SK-N-SH (cell line): ENCODE measurements at regions of chr15 and their contacts with region 1.

Region 1: DNA sequence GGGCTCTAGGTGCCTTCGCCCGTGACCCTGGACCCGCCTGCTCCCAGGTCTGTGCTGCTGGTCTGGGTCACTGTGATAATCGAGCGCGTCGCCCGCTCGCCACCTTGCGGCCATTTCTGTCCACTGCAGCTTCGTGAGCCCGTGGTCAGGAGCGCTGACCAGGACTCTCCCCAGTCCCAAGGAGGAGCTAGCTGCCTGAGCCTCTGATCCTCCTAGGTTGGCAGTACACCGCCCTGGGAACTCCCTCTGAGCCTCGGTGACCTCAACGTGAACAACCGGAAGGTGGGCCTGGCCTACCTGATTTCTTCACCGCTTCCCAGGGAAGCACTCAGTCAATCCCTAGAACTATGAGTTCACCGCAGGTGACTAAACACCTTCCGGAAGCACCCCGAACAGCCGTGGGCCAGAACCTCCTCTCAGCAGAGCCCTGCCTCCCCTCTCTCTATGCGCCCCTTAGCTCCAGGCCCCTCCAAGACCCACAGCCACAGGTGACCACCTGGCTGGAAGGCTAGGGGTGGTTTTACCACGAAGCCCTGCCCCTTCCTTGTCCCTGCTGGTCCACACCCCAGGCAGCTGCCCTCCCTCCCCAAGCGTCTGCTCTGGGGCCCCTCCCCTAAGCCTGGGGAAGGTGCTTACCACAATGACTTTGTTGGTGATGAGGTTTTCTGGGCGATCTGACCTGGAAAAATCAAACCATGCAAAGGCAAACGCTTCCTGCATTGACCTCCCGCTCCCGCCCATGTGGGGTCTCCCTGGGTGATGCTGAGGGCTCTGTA is 9.7 kb downstream of the PLA2G4D start:
- DNase-seq: peak; percentile 89
- H3K4me3 ChIP-seq: peak overlapping the region in 1 of 2 experiments; percentile 49; a peak in 1 of 4 replicates
- H3K27ac ChIP-seq: no peak overlapping the region
- H3K4me1 ChIP-seq: peaks cover 0 to 2% of the 10 kb centered on the region in 2 experiments; a peak in 1 of 4 replicates
- H3K27me3 ChIP-seq: peaks cover 4% of the 10 kb centered on the region; the same call in 1 of the 2 replicates
- CTCF ChIP-seq: peak; percentile 88
- EP300 ChIP-seq: no peak
- RAD21 ChIP-seq: peak; percentile 78

Region 2: GRCh38 chr15:41881920-41882688 is 202.5 kb before region 1 on chr15:
- CTCF ChIA-PET with region 1: no interaction called
- POLR2A ChIA-PET with region 1: no interaction called
- DNase-seq: no peak
- H3K4me3 ChIP-seq: no peak overlapping the region
- H3K27ac ChIP-seq: no peak overlapping the region
- H3K4me1 ChIP-seq: peaks cover 0 to 16% of the 10 kb centered on the region in 2 experiments; a peak in 1 of 4 replicates
- H3K27me3 ChIP-seq: no peaks in the 10 kb centered on the region
- CTCF ChIP-seq: no peak
- EP300 ChIP-seq: no peak
- RAD21 ChIP-seq: no peak

Region 3: DNA sequence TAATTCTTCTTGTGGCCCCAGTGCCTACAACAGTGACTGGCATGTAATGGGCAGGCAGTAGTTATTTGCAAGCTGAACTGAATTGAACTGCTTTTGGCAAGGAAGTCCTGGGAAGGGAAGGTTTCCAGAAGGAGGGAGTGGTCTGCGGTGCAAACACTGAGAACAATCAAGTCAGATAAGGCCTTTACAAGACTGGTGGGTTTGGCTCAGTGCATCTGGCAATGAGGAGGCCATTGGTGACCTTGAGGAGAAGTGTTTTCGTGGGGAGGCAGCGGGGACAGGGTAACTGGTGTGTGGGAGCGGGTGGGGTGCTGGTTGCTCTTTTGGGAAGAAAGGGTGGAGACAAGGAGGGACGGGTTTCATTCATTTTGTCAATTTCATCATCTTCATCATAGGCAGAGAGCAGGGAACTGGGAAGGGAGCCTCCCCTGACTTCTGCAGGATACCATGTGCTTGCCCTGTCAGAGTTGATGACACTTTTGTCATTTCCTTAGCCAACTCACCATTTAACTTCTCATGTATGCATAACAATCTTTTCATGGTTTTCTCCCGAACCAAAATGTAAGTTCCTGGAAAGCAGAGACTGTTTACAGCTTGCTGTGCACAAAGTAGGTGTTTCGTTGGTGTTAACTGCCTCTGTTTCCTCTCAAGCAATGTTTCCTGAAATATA is 103.9 kb before region 1 on chr15:
- CTCF ChIA-PET with region 1: interaction called, 15 read pairs
- POLR2A ChIA-PET with region 1: no interaction called
- DNase-seq: no peak
- H3K4me3 ChIP-seq: no peak overlapping the region
- H3K27ac ChIP-seq: no peak overlapping the region
- H3K4me1 ChIP-seq: no peaks in the 10 kb centered on the region; a peak in 1 of 4 replicates
- H3K27me3 ChIP-seq: no peaks in the 10 kb centered on the region
- CTCF ChIP-seq: no peak
- EP300 ChIP-seq: no peak
- RAD21 ChIP-seq: no peak

Region 4: GRCh38 chr15:42010434-42010833 is 74.2 kb before region 1 on chr15:
- CTCF ChIA-PET with region 1: interaction called, 15 read pairs
- POLR2A ChIA-PET with region 1: no interaction called
- DNase-seq: no peak
- H3K4me3 ChIP-seq: no peak overlapping the region
- H3K27ac ChIP-seq: no peak overlapping the region
- H3K4me1 ChIP-seq: no peaks in the 10 kb centered on the region
- H3K27me3 ChIP-seq: 0 out of 2 replicates have a peak, but pooled peaks cover 9% of the 10 kb centered on the region
- CTCF ChIP-seq: no peak
- EP300 ChIP-seq: no peak
- RAD21 ChIP-seq: no peak

Region 5: GRCh38 chr15:42100021-42100800 is 15.6 kb after region 1 on chr15:
- CTCF ChIA-PET with region 1: interaction called, 48 read pairs
- POLR2A ChIA-PET with region 1: no interaction called
- DNase-seq: no peak
- H3K4me3 ChIP-seq: no peak overlapping the region
- H3K27ac ChIP-seq: no peak overlapping the region
- H3K4me1 ChIP-seq: 0 out of 4 replicates have a peak, but pooled peaks cover 0 to 6% of the 10 kb centered on the region in 2 experiments
- H3K27me3 ChIP-seq: no peaks in the 10 kb centered on the region
- CTCF ChIP-seq: no peak
- EP300 ChIP-seq: no peak
- RAD21 ChIP-seq: no peak

Region 6: DNA sequence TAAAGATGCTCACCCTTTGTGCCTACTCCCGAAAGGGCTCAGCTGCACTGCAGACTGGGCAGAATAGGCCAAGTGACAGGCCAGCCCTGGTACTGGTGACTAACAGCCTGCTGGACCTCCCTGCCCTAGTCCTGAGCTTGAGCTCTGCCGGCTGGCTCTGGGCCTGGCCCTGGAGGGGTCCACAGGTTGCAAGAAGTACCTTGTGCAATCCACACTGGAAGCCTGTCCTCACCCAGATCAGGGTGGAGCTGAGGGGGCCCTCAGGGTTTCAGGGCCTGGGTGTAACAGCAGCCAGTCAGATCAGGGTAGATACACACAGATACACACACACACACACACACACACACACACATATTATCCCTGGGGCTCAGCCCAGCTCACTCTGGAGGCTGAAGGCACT is 37.0 kb after region 1 on chr15:
- CTCF ChIA-PET with region 1: interaction called, 11 read pairs
- POLR2A ChIA-PET with region 1: no interaction called
- DNase-seq: no peak
- H3K4me3 ChIP-seq: no peak overlapping the region
- H3K27ac ChIP-seq: no peak overlapping the region
- H3K4me1 ChIP-seq: peaks cover 0 to 6% of the 10 kb centered on the region in 2 experiments; a peak in 1 of 4 replicates
- H3K27me3 ChIP-seq: peaks cover 20% of the 10 kb centered on the region; the same call in 1 of the 2 replicates
- CTCF ChIP-seq: no peak
- EP300 ChIP-seq: no peak
- RAD21 ChIP-seq: no peak

Region 7: DNA sequence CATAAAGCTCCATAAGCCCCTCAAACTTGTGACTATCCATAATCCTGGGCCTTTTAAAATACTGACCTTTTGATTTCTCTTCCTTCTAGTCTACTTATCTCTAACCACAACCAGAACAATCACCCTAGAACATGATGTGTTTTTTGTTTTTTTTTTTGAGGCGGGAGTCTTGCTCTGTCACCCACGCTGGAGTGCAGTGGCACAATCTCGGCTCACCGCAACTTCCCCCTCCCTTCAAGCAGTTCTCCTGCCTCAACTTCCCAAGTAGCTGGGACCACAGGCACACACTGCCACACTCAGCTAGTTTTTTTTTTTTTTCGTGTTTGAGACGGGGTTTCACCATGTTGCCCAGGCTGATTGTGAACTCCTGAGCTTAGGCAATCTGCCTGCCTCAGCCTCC is 98.3 kb after region 1 on chr15:
- CTCF ChIA-PET with region 1: no interaction called
- POLR2A ChIA-PET with region 1: no interaction called
- DNase-seq: no peak
- H3K4me3 ChIP-seq: no peak overlapping the region
- H3K27ac ChIP-seq: no peak overlapping the region
- H3K4me1 ChIP-seq: no peaks in the 10 kb centered on the region
- H3K27me3 ChIP-seq: no peaks in the 10 kb centered on the region
- CTCF ChIP-seq: no peak
- EP300 ChIP-seq: no peak
- RAD21 ChIP-seq: no peak